ENCODE measurements at regions of chr9 and their contacts with region 1.

Region 1: GRCh38 chr9:136671646-136672430 is 9.1 kb downstream of the EGFL7 start:
- DNase-seq: peak in 1 of 2 experiments; percentile 78
- ATAC-seq: peak in 1 of 2 experiments; percentile 63; a peak in 3 of 6 replicates
- H3K4me3 ChIP-seq: no peak overlapping the region
- H3K27ac ChIP-seq: peak overlapping the region in 1 of 2 experiments; percentile 47; a peak in 1 of 6 replicates
- H3K4me1 ChIP-seq: peaks cover 48% of the 10 kb centered on the region
- CTCF ChIP-seq: peak; percentile 66
- EP300 ChIP-seq: no peak
- POLR2A ChIP-seq: no peak
- RAD21 ChIP-seq: peak; percentile 27 to 31; a peak in 3 of 5 replicates

Region 2: DNA sequence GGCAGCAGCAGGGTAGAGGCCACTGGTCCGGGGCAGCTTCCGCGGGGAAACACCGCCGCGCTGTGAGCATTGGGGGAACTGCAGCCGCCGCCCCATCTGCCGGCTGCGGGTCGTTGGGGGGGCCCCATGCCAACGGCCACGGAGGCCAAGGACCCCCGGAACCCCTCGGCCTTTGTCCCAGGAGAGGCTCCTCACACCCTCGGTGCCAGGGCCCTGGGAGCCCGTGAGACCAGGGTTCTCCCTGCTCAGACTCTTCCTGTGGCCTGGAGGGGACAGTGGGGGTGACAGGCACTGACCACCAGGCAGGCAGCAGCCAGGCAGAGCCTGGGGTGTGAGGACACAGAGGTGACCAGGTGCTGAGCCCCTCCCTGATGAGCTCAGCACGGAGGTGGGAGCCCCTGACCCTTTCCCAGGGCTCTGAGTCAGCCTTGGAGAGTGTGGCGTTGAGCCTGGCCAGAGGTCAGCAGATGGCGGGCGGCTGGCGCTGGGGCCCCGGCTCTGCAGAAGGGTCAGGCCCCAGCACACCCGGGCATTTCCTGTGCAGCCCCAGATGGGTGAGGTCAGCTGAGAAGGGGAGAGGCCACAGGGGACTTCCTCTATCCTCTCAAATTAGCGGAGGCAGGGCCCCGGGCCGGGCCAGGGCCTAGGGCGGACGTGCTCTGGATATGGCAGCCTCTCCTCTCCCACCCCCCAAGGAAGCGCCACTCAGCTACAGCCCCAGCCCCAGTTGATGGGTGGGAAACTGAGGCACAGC is 27.1 kb before region 1 on chr9:
- CTCF ChIA-PET with region 1: interaction called, 10 read pairs
- POLR2A ChIA-PET with region 1: no interaction called
- DNase-seq: peak in 1 of 2 experiments; percentile 88
- ATAC-seq: peak; percentile 83 to 96
- H3K4me3 ChIP-seq: peak overlapping the region; percentile 32; the same call in 2 of the 3 replicates
- H3K27ac ChIP-seq: peak overlapping the region; percentile 63 to 84; a peak in 5 of 6 replicates
- H3K4me1 ChIP-seq: peaks cover 12% of the 10 kb centered on the region
- CTCF ChIP-seq: peak; percentile 67
- EP300 ChIP-seq: no peak
- POLR2A ChIP-seq: no peak
- RAD21 ChIP-seq: peak; percentile 87 to 88

Region 3: DNA sequence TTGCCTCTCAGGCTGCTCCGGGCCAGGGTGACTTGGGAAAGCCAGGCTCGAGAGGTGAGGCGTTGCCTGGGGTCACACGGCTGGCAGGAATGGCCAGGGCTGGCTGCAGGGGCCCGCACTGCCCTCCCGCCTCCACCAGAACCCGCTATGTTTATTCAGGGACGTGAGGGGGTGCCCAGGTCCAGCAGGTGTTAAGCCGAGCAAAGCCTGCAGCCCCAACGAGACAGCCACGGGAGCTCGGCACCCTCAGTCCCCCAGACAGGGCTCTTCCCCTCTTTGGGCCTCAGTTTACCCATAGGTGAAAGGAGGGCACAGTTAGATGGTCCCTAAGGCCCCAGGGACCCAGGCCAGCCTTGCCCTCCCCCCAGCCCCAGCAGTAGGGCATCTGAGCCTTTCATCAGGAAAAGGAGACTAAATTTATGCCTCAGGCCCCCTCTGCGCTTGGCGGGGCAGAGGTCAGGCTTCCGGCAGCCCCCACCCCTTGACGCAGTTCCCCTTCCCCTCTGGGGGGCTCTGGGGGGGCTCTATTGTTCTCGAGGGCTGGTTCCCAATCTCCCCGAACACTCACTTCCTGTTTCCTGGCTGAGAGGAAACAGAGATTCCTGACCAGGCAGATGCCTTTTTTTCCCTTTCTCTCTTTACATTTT is 16.2 kb before region 1 on chr9:
- CTCF ChIA-PET with region 1: interaction called, 26 read pairs
- POLR2A ChIA-PET with region 1: no interaction called
- DNase-seq: no peak
- ATAC-seq: no peak
- H3K4me3 ChIP-seq: no peak overlapping the region
- H3K27ac ChIP-seq: peak overlapping the region in 1 of 2 experiments; percentile 62; a peak in 3 of 6 replicates
- H3K4me1 ChIP-seq: peaks cover 3% of the 10 kb centered on the region; the same call in 1 of the 3 replicates
- CTCF ChIP-seq: no peak
- EP300 ChIP-seq: no peak
- POLR2A ChIP-seq: no peak
- RAD21 ChIP-seq: no peak

Region 4: DNA sequence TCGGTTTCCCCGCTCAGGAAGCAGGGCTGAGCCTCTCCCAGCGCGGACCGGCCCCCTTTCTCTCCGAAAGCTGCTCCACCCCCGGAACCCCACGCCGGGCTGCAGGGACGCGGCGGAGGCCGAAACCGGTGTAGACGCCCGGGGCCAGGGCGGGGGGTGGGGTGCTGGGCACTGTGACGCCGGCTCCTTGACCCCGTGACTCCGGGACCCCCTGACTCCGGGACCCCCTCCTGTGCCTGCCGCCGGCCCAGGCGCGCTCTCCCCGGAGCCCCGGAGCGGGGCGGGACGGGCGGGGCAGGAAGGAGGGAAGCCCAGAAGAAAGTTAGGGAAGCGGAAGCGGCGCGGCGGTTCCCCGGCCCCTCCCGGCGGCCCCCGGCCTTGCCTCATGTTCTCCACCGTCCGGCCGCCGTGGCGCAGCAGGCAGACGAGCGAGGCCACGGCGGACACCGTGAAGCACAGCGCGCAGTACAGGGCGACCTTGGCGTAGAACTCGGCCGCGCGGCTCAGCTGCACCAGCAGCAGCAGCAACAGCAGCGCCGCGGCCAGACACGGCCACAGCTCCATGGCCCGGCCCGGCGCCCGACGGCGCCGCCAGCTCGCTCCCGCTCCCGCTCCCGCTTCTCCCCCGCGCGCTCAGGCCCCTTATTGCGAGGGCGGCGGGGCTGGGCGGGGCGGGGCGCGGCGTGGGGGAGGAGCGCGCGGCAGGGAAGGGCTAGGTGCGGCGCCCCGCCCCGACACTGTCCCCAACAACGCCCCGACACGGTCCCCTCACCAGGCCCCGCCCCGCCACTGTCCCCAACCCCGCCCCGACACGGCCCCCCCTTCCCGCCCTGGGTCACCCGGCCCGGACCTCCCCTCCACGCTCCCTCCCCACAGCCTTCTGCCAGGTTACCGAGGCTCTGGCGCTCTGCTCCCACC is 15.2 kb after region 1 on chr9 and contains the start of gene AGPAT2:
- CTCF ChIA-PET with region 1: interaction called, 186 read pairs
- POLR2A ChIA-PET with region 1: no interaction called
- DNase-seq: peak; percentile 70 to 74
- ATAC-seq: peak; percentile 69 to 77
- H3K4me3 ChIP-seq: peak within 1 kb of the TSS; percentile 72
- H3K27ac ChIP-seq: peak within 1 kb of the TSS; percentile 85 to 96
- H3K4me1 ChIP-seq: peaks cover 34% of the 10 kb centered on the region
- CTCF ChIP-seq: no peak
- EP300 ChIP-seq: no peak
- POLR2A ChIP-seq: peak; percentile 82
- RAD21 ChIP-seq: no peak
- polyA plus RNA-seq, gene AGPAT2: 32.3 and 38.6 TPM in 2 replicates